OCI-LY7 (cell line): ENCODE measurements at regions of chr16 and their contacts with region 1.

Region 1: DNA sequence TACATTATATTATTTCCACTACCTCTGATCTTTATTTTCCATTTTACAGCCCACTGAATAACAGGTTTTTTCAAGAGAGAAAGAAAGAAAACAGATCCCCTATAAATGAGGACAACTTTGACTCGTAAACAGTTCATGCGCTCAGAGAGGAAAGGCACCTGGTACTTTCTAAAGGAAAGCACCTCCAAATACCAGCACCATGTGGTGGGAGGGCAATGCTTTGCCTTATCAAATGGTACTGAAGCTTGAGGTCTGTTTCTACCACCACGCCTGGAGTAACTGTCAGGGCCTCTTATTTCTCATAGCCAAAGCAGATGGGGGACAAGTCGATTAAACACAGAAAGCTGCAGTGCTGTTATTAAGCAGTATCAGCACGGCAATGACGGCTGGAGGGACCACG is 510.3 kb upstream of the ZFHX3 start:
- DNase-seq: no peak
- H3K4me3 ChIP-seq: no peak overlapping the region
- H3K27ac ChIP-seq: no peak overlapping the region
- H3K4me1 ChIP-seq: no peaks in the 10 kb centered on the region
- CTCF ChIP-seq: no peak

Region 2: GRCh38 chr16:73572135-73572828 is 14.1 kb after region 1 on chr16:
- CTCF ChIA-PET with region 1: no interaction called
- POLR2A ChIA-PET with region 1: interaction called, 10 read pairs
- intact Hi-C with region 1: no loop called
- DNase-seq: no peak
- H3K4me3 ChIP-seq: no peak overlapping the region
- H3K27ac ChIP-seq: no peak overlapping the region
- H3K4me1 ChIP-seq: no peaks in the 10 kb centered on the region
- CTCF ChIP-seq: no peak